MCF 10A (cell line): ENCODE measurements at regions of chr10 and their contacts with region 1.

Region 1: GRCh38 chr10:3197348-3198003 is 24.9 kb upstream of the PITRM1 start:
- DNase-seq: peak; percentile 80
- H3K4me3 Mint-ChIP-seq: peak overlapping the region; percentile 69
- H3K27ac Mint-ChIP-seq: peak overlapping the region; percentile 61
- H3K4me1 Mint-ChIP-seq: peaks cover 16% of the 10 kb centered on the region
- H3K27me3 Mint-ChIP-seq: no peaks in the 10 kb centered on the region
- CTCF ChIP-seq: peak; percentile 79

Region 2: GRCh38 chr10:2700626-2701305 is 496.7 kb before region 1 on chr10:
- CTCF ChIA-PET with region 1: no interaction called
- POLR2A ChIA-PET with region 1: no interaction called
- intact Hi-C with region 1: no loop called
- DNase-seq: no peak
- H3K4me3 Mint-ChIP-seq: no peak overlapping the region
- H3K27ac Mint-ChIP-seq: no peak overlapping the region
- H3K4me1 Mint-ChIP-seq: no peaks in the 10 kb centered on the region
- H3K27me3 Mint-ChIP-seq: peaks cover 17% of the 10 kb centered on the region
- CTCF ChIP-seq: no peak

Region 3: GRCh38 chr10:3085785-3086567 is 111.5 kb before region 1 on chr10:
- CTCF ChIA-PET with region 1: no interaction called
- POLR2A ChIA-PET with region 1: no interaction called
- intact Hi-C with region 1: no loop called
- DNase-seq: no peak
- H3K4me3 Mint-ChIP-seq: no peak overlapping the region
- H3K27ac Mint-ChIP-seq: peak overlapping the region; percentile 51
- H3K4me1 Mint-ChIP-seq: peaks cover 25% of the 10 kb centered on the region
- H3K27me3 Mint-ChIP-seq: no peaks in the 10 kb centered on the region
- CTCF ChIP-seq: no peak

Region 4: GRCh38 chr10:3226960-3227744 is 29.7 kb after region 1 on chr10:
- CTCF ChIA-PET with region 1: interaction called, 6 read pairs
- POLR2A ChIA-PET with region 1: interaction called, 5 read pairs
- intact Hi-C with region 1: loop called (anchors 2 kb)
- DNase-seq: peak; percentile 79
- H3K4me3 Mint-ChIP-seq: peak overlapping the region; percentile 36
- H3K27ac Mint-ChIP-seq: peak overlapping the region; percentile 90
- H3K4me1 Mint-ChIP-seq: peaks cover 19% of the 10 kb centered on the region
- H3K27me3 Mint-ChIP-seq: no peaks in the 10 kb centered on the region
- CTCF ChIP-seq: no peak

Region 5: GRCh38 chr10:3239066-3239919 is 41.8 kb after region 1 on chr10:
- CTCF ChIA-PET with region 1: interaction called, 4 read pairs
- POLR2A ChIA-PET with region 1: no interaction called
- intact Hi-C with region 1: loop called (anchors 1 kb)
- DNase-seq: peak; percentile 67
- H3K4me3 Mint-ChIP-seq: no peak overlapping the region
- H3K27ac Mint-ChIP-seq: peak overlapping the region; percentile 37
- H3K4me1 Mint-ChIP-seq: peaks cover 5% of the 10 kb centered on the region
- H3K27me3 Mint-ChIP-seq: no peaks in the 10 kb centered on the region
- CTCF ChIP-seq: peak; percentile 89